Common myeloid progenitor, CD34-positive (primary cell): ENCODE measurements at regions of chr7 and their contacts with region 1.

Region 1: DNA sequence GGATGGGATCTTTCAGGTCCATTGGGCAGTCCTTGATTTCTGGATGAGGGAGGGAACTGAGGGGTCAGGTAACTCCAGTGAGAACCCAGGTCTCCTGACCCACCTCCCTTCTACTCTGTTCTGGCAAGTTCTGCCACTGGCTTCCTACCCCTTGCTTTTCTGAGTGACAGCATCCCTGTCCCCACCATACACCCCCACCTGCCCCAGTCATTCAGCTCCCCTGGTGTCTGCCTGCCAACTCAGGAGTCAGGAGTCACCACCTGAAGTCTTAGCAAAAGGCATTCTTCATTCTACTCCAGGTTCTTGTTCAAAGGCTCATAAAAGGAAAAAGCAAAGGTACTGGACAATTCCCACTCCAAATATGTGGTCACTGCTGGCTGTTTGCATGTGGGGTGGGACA is 26.6 kb downstream of the CDHR3 start:
- DNase-seq: no peak
- H3K4me3 ChIP-seq: no peak overlapping the region
- H3K27ac ChIP-seq: no peak overlapping the region
- H3K4me1 ChIP-seq: peaks cover 2 to 18% (median 6%) of the 10 kb centered on the region in 4 experiments
- H3K27me3 ChIP-seq: peaks cover 0 to 23% (median 10%) of the 10 kb centered on the region in 5 experiments

Region 2: DNA sequence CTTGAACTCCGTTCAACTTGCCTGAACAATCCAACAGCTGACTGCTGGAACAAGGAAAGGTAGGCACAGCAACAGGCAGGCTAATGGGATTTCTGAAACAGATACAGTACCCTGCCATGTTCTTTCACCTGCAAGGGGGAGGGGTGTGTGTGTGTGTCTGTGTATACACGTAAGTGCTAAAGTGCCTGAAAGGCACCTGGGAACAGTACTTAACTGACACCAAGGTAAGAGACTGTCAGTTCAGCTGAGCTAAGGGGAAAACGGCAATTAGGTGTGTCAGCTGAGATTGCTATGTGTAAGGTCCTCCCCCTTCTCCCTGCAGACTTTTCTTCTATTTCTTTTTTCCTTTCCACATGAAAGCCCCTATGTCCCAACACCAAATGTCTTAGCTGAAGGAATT is 268.1 kb after region 1 on chr7:
- CTCF ChIA-PET with region 1: no interaction called
- POLR2A ChIA-PET with region 1: interaction called, 10 read pairs
- DNase-seq: no peak
- H3K4me3 ChIP-seq: no peak overlapping the region
- H3K27ac ChIP-seq: no peak overlapping the region
- H3K4me1 ChIP-seq: no peaks in the 10 kb centered on the region
- H3K27me3 ChIP-seq: no peaks in the 10 kb centered on the region